ENCODE measurements at regions of chr3 and their contacts with region 1.

Region 1: DNA sequence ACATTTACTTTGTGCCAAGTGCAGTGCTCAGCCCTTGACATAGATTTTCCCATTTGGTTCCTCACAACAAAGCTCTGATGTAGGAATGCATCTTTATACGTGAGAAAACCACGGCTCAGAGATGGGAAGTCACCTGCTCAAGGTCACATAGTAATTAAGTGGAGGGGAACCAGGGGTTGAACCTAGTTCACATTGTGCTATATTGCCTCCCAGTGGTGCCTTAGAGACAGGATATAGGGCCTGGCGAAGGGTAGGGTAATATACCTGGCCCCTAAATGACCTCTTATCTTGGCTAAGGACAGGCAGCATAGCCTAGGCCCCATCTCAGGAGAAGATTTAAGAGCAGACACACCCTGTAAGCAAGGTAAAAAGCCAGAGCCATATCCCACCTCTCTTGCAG is 71.5 kb downstream of the FOXP1 start:
- DNase-seq: no peak
- H3K4me3 ChIP-seq: no peak overlapping the region
- H3K27ac ChIP-seq: no peak overlapping the region
- H3K4me1 ChIP-seq: peaks cover 0 to 10% (median 5%) of the 10 kb centered on the region in 4 experiments; a peak in 4 of 7 replicates
- H3K27me3 ChIP-seq: no peaks in the 10 kb centered on the region
- CTCF ChIP-seq: peak; percentile 25 to 79 (median 75)
- EP300 ChIP-seq: no peak
- POLR2A ChIP-seq: no peak
- RAD21 ChIP-seq: peak; percentile 86 to 93

Region 2: DNA sequence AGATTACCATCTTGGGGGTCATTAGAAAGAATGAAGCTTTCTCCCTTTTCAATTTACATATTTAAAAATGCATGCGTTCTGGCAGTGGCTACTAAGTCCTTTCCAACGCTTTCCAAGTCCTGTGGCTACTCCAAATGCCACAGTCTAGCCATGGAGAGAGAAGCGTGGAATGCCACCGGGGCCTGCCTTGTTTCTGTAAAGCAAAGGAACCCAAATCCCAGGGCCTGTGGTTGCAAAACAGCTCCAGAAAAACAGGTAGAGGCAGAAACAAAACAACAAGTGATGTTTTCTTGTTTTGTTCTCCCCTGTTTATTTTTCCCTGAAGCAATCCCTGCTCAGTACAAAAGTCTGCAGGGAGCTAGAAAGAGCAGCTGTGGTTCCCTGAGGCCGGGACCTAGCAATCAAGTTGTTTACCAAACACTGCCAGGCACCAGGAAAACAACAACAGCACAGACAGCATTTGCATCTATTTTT is 14.0 kb before region 1 on chr3:
- CTCF ChIA-PET with region 1: interaction called, 14 read pairs
- POLR2A ChIA-PET with region 1: interaction called, 4 read pairs
- DNase-seq: peak in 1 of 2 experiments; percentile 17
- H3K4me3 ChIP-seq: peak overlapping the region in 2 of 4 experiments; percentile 0 to 3; a peak in 3 of 8 replicates
- H3K27ac ChIP-seq: peak overlapping the region; percentile 75
- H3K4me1 ChIP-seq: peaks cover 10 to 27% (median 23%) of the 10 kb centered on the region in 4 experiments
- H3K27me3 ChIP-seq: no peaks in the 10 kb centered on the region
- CTCF ChIP-seq: no peak
- EP300 ChIP-seq: peak in 1 of 2 experiments; percentile 94; a peak in 1 of 3 replicates
- POLR2A ChIP-seq: no peak
- RAD21 ChIP-seq: no peak; a peak in 1 of 4 replicates

Region 3: GRCh38 chr3:71987086-71987735 is 475.2 kb after region 1 on chr3:
- CTCF ChIA-PET with region 1: no interaction called
- POLR2A ChIA-PET with region 1: no interaction called
- DNase-seq: no peak
- H3K4me3 ChIP-seq: no peak overlapping the region
- H3K27ac ChIP-seq: no peak overlapping the region
- H3K4me1 ChIP-seq: no peaks in the 10 kb centered on the region
- H3K27me3 ChIP-seq: no peaks in the 10 kb centered on the region
- CTCF ChIP-seq: peak; percentile 45 to 63 (median 55)
- EP300 ChIP-seq: no peak
- POLR2A ChIP-seq: no peak
- RAD21 ChIP-seq: peak; percentile 58 to 67